ENCODE measurements at regions of chr1 and their contacts with region 1.

Region 1: DNA sequence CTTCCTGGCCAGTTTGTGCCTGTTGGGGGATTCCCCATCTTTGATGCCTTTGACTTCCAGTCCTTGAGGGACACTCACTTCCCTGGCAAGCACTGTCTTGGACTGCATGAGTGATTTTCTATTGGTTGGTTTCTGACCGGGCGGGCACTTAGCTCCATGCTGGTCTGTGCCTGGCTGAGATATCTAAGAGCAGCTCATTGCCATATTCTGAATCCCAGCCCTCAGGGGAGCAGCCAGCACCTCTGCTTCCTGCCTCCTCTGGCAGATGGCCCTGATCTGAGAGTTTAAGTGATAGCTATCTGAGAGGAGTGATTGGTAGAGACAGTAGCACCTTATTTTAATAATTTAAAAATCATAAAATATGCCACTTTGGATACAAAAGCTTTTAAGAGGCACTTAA is 52.5 kb downstream of the DISC1 start:
- DNase-seq: no peak
- H3K4me3 ChIP-seq: no peak overlapping the region
- H3K27me3 ChIP-seq: no peaks in the 10 kb centered on the region
- CTCF ChIP-seq: no peak

Region 2: GRCh38 chr1:231571904-231572303 is 107.2 kb before region 1 on chr1:
- CTCF ChIA-PET with region 1: no interaction called
- POLR2A ChIA-PET with region 1: no interaction called
- DNase-seq: no peak
- H3K4me3 ChIP-seq: no peak overlapping the region
- H3K27me3 ChIP-seq: no peaks in the 10 kb centered on the region
- CTCF ChIP-seq: no peak

Region 3: GRCh38 chr1:231691618-231692259 is 12.6 kb after region 1 on chr1:
- CTCF ChIA-PET with region 1: interaction called, 18 read pairs
- POLR2A ChIA-PET with region 1: no interaction called
- DNase-seq: no peak
- H3K4me3 ChIP-seq: no peak overlapping the region
- H3K27me3 ChIP-seq: no peaks in the 10 kb centered on the region
- CTCF ChIP-seq: peak; percentile 91